HEK293T (cell line): ENCODE measurements at regions of chr12 and their contacts with region 1.

Region 1: DNA sequence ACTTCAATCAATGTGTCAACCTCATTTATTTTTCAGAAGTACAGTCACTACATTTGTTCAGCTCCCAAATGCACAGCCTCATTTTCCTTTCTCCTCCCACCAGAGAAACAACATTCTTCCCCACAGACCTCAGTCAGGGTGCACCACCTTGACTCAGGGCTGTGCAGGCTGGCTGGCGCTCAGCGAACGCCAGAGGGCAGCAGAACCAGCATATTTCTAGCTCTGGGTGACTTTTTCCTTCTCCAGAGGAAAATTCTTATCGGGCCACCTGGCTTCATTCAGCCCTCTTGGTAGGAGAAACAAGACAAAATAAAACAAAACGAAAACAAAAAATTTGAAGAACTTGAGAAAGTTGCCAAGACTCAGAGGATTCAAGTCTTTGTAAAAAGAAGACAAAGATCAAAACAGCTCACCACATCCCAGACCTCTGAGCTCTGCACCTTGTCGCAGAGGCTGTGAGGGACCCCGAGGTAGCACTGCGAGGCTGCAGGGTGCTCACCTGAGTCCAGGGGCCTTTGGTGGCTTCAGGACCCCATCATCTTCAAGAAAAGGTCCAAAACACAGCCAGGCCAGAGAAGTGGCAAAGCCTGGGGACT is 33.7 kb downstream of the PAH start:
- DNase-seq: peak; percentile 61

Region 2: GRCh38 chr12:103548622-103549601 is 665.6 kb after region 1 on chr12:
- CTCF ChIA-PET with region 1: interaction called, 19 read pairs
- POLR2A ChIA-PET with region 1: no interaction called
- DNase-seq: peak; percentile 61